Uterus (tissue), 4 donors: ENCODE measurements at regions of chr19 and their contacts with region 1.

Region 1: DNA sequence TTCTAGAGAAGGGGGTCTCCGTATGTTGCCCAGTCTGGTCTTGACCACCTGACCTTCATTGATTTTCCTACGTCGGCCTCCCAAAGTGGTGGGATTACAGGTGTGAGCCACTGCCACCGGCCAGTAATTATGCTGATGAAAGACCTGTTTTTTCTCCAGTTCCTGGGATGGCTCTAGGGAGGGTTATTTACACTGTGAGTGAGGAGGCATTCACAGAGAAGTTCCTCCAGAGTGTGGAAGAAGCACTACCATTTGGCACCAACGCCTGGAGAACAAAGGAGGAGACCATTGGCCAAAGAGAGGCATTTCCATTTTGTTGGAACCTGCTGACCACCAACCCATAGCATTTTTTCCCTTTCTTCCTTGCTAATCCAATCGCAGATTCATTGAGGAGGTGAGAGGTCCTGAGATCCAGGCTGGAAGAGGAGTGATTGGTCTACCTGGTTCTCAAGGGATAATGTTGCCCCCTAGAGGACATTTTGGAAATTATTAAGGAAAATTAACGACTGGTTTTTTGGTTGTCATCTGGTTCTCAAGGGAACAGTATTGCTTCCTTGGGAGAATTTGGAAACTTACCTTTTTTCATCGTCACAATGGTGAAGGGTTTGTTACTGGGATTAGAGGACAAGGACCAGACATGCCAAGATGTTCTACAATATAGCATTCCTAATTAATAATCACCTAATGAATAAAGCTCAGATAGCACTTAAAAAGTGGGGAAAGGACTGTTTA is 5.5 kb upstream of the SAE1 start:
- DNase-seq: no peak
- H3K4me3 ChIP-seq: no peak overlapping the region
- H3K27ac ChIP-seq: no peak overlapping the region
- H3K4me1 ChIP-seq: no peaks in the 10 kb centered on the region
- H3K27me3 ChIP-seq: no peaks in the 10 kb centered on the region
- CTCF ChIP-seq: peak; percentile 70 to 89 (median 84)
- POLR2A ChIP-seq: no peak

Region 2: GRCh38 chr19:47035127-47036096 is 89.7 kb before region 1 on chr19:
- intact Hi-C with region 1: loop called (anchors 10 kb)
- DNase-seq: peak; percentile 83 to 91
- H3K4me3 ChIP-seq: peak overlapping the region; percentile 37 to 46
- H3K27ac ChIP-seq: peak overlapping the region in 1 of 2 donors; percentile 42
- H3K4me1 ChIP-seq: peaks cover 0 to 8% of the 10 kb centered on the region in 2 donors
- H3K27me3 ChIP-seq: peaks cover 0 to 9% of the 10 kb centered on the region in 2 donors
- CTCF ChIP-seq: peak; percentile 95 to 98 (median 96)
- POLR2A ChIP-seq: no peak

Region 3: GRCh38 chr19:47243776-47244547 is 118.9 kb after region 1 on chr19:
- intact Hi-C with region 1: no loop called
- DNase-seq: peak; percentile 94
- H3K4me3 ChIP-seq: peak overlapping the region in 1 of 2 donors; percentile 6
- H3K27ac ChIP-seq: peak overlapping the region; percentile 71 to 73
- H3K4me1 ChIP-seq: peaks cover 4 to 21% of the 10 kb centered on the region in 2 donors
- H3K27me3 ChIP-seq: no peaks in the 10 kb centered on the region
- CTCF ChIP-seq: peak; percentile 97 to 100 (median 100)
- POLR2A ChIP-seq: peak; percentile 40 to 60

Region 4: GRCh38 chr19:47273313-47273977 is 148.3 kb after region 1 on chr19:
- intact Hi-C with region 1: no loop called
- DNase-seq: peak; percentile 92 to 93
- H3K4me3 ChIP-seq: peak overlapping the region; percentile 54 to 63
- H3K27ac ChIP-seq: peak overlapping the region; percentile 94 to 98
- H3K4me1 ChIP-seq: peaks cover 3 to 16% of the 10 kb centered on the region in 2 donors
- H3K27me3 ChIP-seq: no peaks in the 10 kb centered on the region
- CTCF ChIP-seq: peak in 1 of 4 experiments; percentile 14
- POLR2A ChIP-seq: peak; percentile 77 to 82